ENCODE measurements at regions of chr6 and their contacts with region 1.

Region 1: GRCh38 chr6:157379656-157380454 is 1.1 kb upstream of the ZDHHC14 start:
- DNase-seq: peak; percentile 82
- ATAC-seq: peak; percentile 79
- H3K4me3 ChIP-seq: peak overlapping the region; percentile 75 to 86
- H3K27ac ChIP-seq: peak overlapping the region; percentile 84
- H3K4me1 ChIP-seq: peaks cover 6 to 17% of the 10 kb centered on the region in 2 experiments; a peak in 3 of 4 replicates
- H3K27me3 ChIP-seq: no peaks in the 10 kb centered on the region
- CTCF ChIP-seq: no peak
- POLR2A ChIP-seq: peak; percentile 52
- RAD21 ChIP-seq: no peak

Region 2: DNA sequence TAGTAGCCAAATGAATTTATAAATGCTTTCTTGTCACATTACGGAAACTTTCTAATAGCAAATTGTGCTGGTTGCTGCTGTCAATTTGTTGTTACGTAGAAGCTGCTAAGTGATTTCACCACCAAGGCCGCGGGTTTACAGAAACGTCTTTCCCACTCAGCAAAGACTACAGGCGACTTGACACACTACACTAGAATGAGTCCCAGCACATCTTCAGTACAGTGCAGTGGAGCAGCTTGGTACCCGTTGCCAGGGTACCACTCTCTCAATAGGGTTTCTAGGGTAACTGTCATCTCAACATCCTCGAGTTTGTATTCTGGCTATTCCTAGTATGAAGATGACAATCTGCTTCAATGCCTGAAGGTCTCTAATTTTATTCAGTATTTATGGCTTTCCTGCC is 21.6 kb before region 1 on chr6:
- CTCF ChIA-PET with region 1: no interaction called
- POLR2A ChIA-PET with region 1: no interaction called
- RAD21 ChIA-PET with region 1: no interaction called
- intact Hi-C with region 1: no loop called
- DNase-seq: no peak
- ATAC-seq: no peak
- H3K4me3 ChIP-seq: no peak overlapping the region
- H3K27ac ChIP-seq: no peak overlapping the region
- H3K4me1 ChIP-seq: no peaks in the 10 kb centered on the region
- H3K27me3 ChIP-seq: no peaks in the 10 kb centered on the region
- CTCF ChIP-seq: no peak
- POLR2A ChIP-seq: no peak
- RAD21 ChIP-seq: no peak

Region 3: DNA sequence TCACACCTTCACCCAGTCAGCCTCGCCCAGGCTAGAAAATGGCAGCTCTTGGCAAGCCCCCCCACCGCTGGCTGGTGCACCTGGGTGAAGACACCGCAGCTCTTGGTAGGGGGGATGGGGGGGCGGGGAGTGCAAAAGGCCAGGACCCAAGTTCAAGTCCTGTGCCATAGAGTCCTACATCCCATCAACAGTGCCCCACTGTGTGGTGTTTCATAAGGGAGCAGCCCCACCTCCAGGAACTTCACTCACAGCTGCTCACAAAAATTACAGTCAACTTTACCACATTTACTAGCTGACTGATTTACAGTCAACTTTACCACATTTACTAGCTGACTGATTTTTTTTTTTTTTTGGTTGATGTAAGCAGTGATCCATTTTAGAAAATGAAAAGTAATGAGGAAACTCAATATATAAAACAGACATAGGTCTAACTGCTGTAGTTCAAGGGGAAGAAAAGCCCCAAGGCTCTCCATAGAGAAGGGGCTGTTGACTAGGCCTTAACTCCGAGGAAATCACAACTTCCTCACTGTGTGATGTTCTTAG is 234.2 kb after region 1 on chr6:
- CTCF ChIA-PET with region 1: no interaction called
- POLR2A ChIA-PET with region 1: no interaction called
- RAD21 ChIA-PET with region 1: no interaction called
- intact Hi-C with region 1: loop called (anchors 5 kb)
- DNase-seq: no peak
- ATAC-seq: no peak
- H3K4me3 ChIP-seq: no peak overlapping the region
- H3K27ac ChIP-seq: peak overlapping the region; percentile 57
- H3K4me1 ChIP-seq: peaks cover 18 to 29% of the 10 kb centered on the region in 2 experiments
- H3K27me3 ChIP-seq: no peaks in the 10 kb centered on the region
- CTCF ChIP-seq: 0 out of 6 replicates have a peak, but pooled peaks of 1 of the 3 experiments have one; percentile 13
- POLR2A ChIP-seq: no peak
- RAD21 ChIP-seq: peak; percentile 43; the same call in 1 of the 2 replicates

Measured in HCT116 (cell line).